Gastrocnemius medialis (tissue), 4 donors: ENCODE measurements at regions of chr7 and their contacts with region 1.

Region 1: GRCh38 chr7:96093435-96093834 is 228.5 kb downstream of the SLC25A13 start:
- DNase-seq: no peak
- ATAC-seq: no peak
- H3K4me3 ChIP-seq: no peak overlapping the region
- H3K27ac ChIP-seq: no peak overlapping the region
- H3K4me1 ChIP-seq: no peaks in the 10 kb centered on the region
- H3K27me3 ChIP-seq: no peaks in the 10 kb centered on the region
- CTCF ChIP-seq: no peak
- POLR2A ChIP-seq: no peak

Region 2: GRCh38 chr7:96045919-96046318 is 47.5 kb before region 1 on chr7:
- in situ Hi-C with region 1: no loop called
- intact Hi-C with region 1: loop called (anchors 2 kb)
- DNase-seq: no peak
- ATAC-seq: no peak
- H3K4me3 ChIP-seq: no peak overlapping the region
- H3K27ac ChIP-seq: no peak overlapping the region
- H3K4me1 ChIP-seq: no peaks in the 10 kb centered on the region
- H3K27me3 ChIP-seq: no peaks in the 10 kb centered on the region
- CTCF ChIP-seq: no peak
- POLR2A ChIP-seq: no peak

Region 3: DNA sequence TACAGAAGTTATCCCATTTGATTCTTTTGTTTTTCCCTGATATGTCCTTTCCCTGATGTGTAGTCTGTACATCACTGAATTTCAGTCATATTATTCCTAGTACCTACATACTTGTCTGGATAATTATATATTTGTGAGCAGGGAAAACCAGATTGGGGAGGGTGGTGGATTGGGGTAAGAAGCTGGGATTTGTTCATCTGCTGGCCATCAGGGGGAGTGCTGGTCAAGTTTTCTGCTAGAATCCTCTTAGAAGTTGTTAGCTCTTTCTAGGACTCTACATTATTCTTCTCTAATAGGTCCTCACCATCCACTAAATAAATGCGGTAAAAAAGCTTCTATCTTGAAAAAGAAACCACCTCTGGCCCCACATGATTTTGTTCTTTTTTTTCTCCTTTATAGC is 1405.8 kb after region 1 on chr7:
- in situ Hi-C with region 1: no loop called
- intact Hi-C with region 1: no loop called
- DNase-seq: no peak
- ATAC-seq: no peak
- H3K4me3 ChIP-seq: no peak overlapping the region
- H3K27ac ChIP-seq: no peak overlapping the region
- H3K4me1 ChIP-seq: no peaks in the 10 kb centered on the region
- H3K27me3 ChIP-seq: no peaks in the 10 kb centered on the region
- CTCF ChIP-seq: no peak
- POLR2A ChIP-seq: no peak